Activated CD8-positive, alpha-beta T cell treated with anti-CD3 and anti-CD28 coated beads for 36 hours (primary cell): ENCODE measurements at regions of chr16 and their contacts with region 1.

Region 1: DNA sequence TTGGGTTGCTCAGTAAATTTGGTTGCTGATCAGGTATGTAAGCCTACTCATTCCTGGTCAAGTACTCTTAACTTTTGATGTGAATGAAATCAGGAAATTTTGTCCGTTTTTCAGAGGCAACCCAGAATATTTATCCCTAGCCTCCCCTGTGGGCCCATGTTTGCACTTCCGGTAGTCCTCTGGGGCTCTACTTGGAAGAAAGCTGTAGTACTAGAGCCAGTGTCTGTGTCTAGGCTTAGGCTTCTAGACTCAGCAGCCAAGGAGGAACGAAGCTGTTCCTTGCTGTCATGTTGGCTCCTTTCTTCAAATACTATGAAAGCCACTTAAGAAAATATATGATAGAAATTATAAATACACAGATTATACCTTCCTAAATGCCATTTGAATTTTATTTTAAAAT is 21.2 kb downstream of the ESRP2 start:
- DNase-seq: no peak
- ATAC-seq: no peak
- H3K4me3 Mint-ChIP-seq: no peak overlapping the region
- H3K27ac Mint-ChIP-seq: peak overlapping the region; percentile 57
- H3K4me1 Mint-ChIP-seq: peaks cover 33% of the 10 kb centered on the region
- H3K27me3 Mint-ChIP-seq: no peaks in the 10 kb centered on the region
- CTCF ChIP-seq: no peak

Region 2: GRCh38 chr16:67917852-67918236 is 296.9 kb before region 1 on chr16:
- CTCF ChIA-PET with region 1: no interaction called
- POLR2A ChIA-PET with region 1: no interaction called
- intact Hi-C with region 1: no loop called
- DNase-seq: peak; percentile 75
- ATAC-seq: peak; percentile 100
- H3K4me3 Mint-ChIP-seq: no peak overlapping the region
- H3K27ac Mint-ChIP-seq: peak overlapping the region; percentile 82
- H3K4me1 Mint-ChIP-seq: peaks cover 30% of the 10 kb centered on the region
- H3K27me3 Mint-ChIP-seq: no peaks in the 10 kb centered on the region
- CTCF ChIP-seq: no peak

Region 3: GRCh38 chr16:68229431-68230198 is 14.9 kb after region 1 on chr16:
- CTCF ChIA-PET with region 1: interaction called, 26 read pairs
- POLR2A ChIA-PET with region 1: interaction called, 4 read pairs
- intact Hi-C with region 1: no loop called
- DNase-seq: peak; percentile 64
- ATAC-seq: no peak
- H3K4me3 Mint-ChIP-seq: no peak overlapping the region
- H3K27ac Mint-ChIP-seq: peak overlapping the region; percentile 75
- H3K4me1 Mint-ChIP-seq: peaks cover 50% of the 10 kb centered on the region
- H3K27me3 Mint-ChIP-seq: no peaks in the 10 kb centered on the region
- CTCF ChIP-seq: peak; percentile 88